Activated CD8-positive, alpha-beta T cell treated with anti-CD3 and anti-CD28 coated beads for 36 hours (primary cell): ENCODE measurements at regions of chr20 and their contacts with region 1.

Region 1: GRCh38 chr20:36861875-36862801 is 13.8 kb upstream of the TLDC2 start:
- DNase-seq: no peak
- ATAC-seq: no peak
- H3K4me3 Mint-ChIP-seq: peak overlapping the region; percentile 40
- H3K27ac Mint-ChIP-seq: no peak overlapping the region
- H3K4me1 Mint-ChIP-seq: peaks cover 14% of the 10 kb centered on the region
- H3K27me3 Mint-ChIP-seq: peaks cover 16% of the 10 kb centered on the region
- CTCF ChIP-seq: no peak

Region 2: GRCh38 chr20:36835453-36836198 is 26.5 kb before region 1 on chr20:
- CTCF ChIA-PET with region 1: interaction called, 16 read pairs
- POLR2A ChIA-PET with region 1: interaction called, 4 read pairs
- intact Hi-C with region 1: no loop called
- DNase-seq: peak; percentile 93
- ATAC-seq: peak; percentile 96
- H3K4me3 Mint-ChIP-seq: peak overlapping the region; percentile 75
- H3K27ac Mint-ChIP-seq: peak overlapping the region; percentile 88
- H3K4me1 Mint-ChIP-seq: peaks cover 12% of the 10 kb centered on the region
- H3K27me3 Mint-ChIP-seq: no peaks in the 10 kb centered on the region
- CTCF ChIP-seq: no peak

Region 3: DNA sequence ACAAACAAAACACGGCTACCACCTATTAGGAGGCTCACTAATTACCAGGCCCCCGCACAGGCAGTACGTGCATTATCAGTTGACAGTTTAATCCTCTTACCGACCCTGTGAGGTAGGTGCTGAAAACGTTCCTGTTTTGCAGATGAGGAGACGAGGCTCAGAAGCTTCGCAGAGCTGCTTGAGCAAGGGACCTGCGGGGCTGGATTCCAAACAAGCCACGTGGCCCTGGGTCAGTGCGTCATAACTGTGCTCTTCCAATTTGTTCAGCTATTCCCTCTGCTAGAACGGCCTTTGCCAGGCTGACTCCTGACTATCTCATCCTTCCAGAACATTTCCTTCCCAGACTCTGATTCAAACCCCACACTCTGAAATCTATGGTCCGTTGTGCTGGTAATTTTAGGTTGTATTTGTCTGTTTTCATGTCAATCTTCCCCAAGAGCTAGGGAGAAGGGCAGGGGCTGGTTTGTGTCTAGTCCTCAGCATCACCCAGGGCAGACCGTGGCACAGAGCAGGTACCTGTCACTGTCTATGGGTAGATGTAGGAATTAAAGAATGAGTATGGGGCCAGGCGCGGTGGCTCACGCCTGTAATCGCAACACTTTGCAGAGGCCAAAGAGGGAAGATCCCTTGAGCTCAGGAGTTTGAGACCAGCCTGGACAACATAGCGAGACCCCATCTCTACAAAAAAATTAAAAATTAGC is 15.0 kb before region 1 on chr20:
- CTCF ChIA-PET with region 1: interaction called, 4 read pairs
- POLR2A ChIA-PET with region 1: interaction called, 20 read pairs
- intact Hi-C with region 1: no loop called
- DNase-seq: no peak
- ATAC-seq: no peak
- H3K4me3 Mint-ChIP-seq: no peak overlapping the region
- H3K27ac Mint-ChIP-seq: no peak overlapping the region
- H3K4me1 Mint-ChIP-seq: peaks cover 27% of the 10 kb centered on the region
- H3K27me3 Mint-ChIP-seq: no peaks in the 10 kb centered on the region
- CTCF ChIP-seq: no peak